ENCODE measurements at regions of chr5 and their contacts with region 1.

Region 1: GRCh38 chr5:113513384-113514288 is at the start of gene YTHDC2:
- DNase-seq: peak; percentile 92
- H3K4me3 ChIP-seq: peak within 1 kb of the TSS; percentile 94
- H3K27ac ChIP-seq: peak within 1 kb of the TSS; percentile 93
- H3K4me1 ChIP-seq: peaks cover 6% of the 10 kb centered on the region
- H3K27me3 ChIP-seq: peaks cover 7% of the 10 kb centered on the region
- CTCF ChIP-seq: peak; percentile 51; the same call in 1 of the 2 replicates
- total RNA-seq, gene YTHDC2: 24.3 and 26.0 TPM in 2 replicates

Region 2: GRCh38 chr5:112995764-112996618 is 517.6 kb before region 1 on chr5:
- CTCF ChIA-PET with region 1: interaction called, 4 read pairs
- POLR2A ChIA-PET with region 1: no interaction called
- intact Hi-C with region 1: loop called (anchors 5 kb)
- DNase-seq: peak; percentile 75
- H3K4me3 ChIP-seq: no peak overlapping the region
- H3K27ac ChIP-seq: no peak overlapping the region
- H3K4me1 ChIP-seq: no peaks in the 10 kb centered on the region
- H3K27me3 ChIP-seq: no peaks in the 10 kb centered on the region
- CTCF ChIP-seq: peak; percentile 89

Region 3: DNA sequence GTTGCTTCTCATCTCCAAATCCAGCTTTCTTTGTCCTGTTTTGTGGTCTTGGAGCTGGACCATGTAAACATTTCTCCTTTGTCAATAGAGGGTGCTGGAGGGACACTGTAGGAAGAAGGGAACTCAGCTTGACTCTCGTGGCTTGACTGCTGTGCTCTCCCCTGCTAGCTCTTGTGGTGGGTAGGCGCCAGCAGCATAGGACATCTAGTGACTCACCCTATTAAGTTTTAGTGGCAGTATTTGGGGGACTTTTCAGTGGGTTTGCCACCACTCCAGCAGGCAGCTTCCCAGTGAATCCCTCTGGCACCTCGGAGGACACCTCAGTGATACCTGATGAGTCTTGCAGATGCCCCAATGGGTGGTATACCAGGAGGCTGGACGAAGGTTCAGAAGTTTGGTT is 176.7 kb before region 1 on chr5:
- CTCF ChIA-PET with region 1: interaction called, 5 read pairs
- POLR2A ChIA-PET with region 1: no interaction called
- intact Hi-C with region 1: loop called (anchors 5 kb)
- DNase-seq: peak; percentile 69
- H3K4me3 ChIP-seq: no peak overlapping the region
- H3K27ac ChIP-seq: no peak overlapping the region
- H3K4me1 ChIP-seq: no peaks in the 10 kb centered on the region
- H3K27me3 ChIP-seq: no peaks in the 10 kb centered on the region
- CTCF ChIP-seq: peak; percentile 49

Region 4: GRCh38 chr5:113378959-113379541 is 134.6 kb before region 1 on chr5:
- CTCF ChIA-PET with region 1: interaction called, 3 read pairs
- POLR2A ChIA-PET with region 1: no interaction called
- intact Hi-C with region 1: loop called (anchors 2 kb)
- DNase-seq: peak; percentile 68
- H3K4me3 ChIP-seq: no peak overlapping the region
- H3K27ac ChIP-seq: no peak overlapping the region
- H3K4me1 ChIP-seq: no peaks in the 10 kb centered on the region
- H3K27me3 ChIP-seq: no peaks in the 10 kb centered on the region
- CTCF ChIP-seq: peak; percentile 84

Measured in A673 (cell line).